ENCODE measurements at regions of chr7 and their contacts with region 1.

Region 1: GRCh38 chr7:39580149-39580874 is 14.1 kb downstream of the YAE1 start:
- DNase-seq: peak; percentile 63
- H3K4me3 Mint-ChIP-seq: no peak overlapping the region
- H3K27ac Mint-ChIP-seq: peak overlapping the region; percentile 64
- H3K4me1 Mint-ChIP-seq: peaks cover 10% of the 10 kb centered on the region
- H3K27me3 Mint-ChIP-seq: no peaks in the 10 kb centered on the region

Region 2: GRCh38 chr7:38463277-38464225 is 1116.8 kb before region 1 on chr7:
- intact Hi-C with region 1: no loop called
- DNase-seq: peak; percentile 61
- H3K4me3 Mint-ChIP-seq: peak overlapping the region; percentile 29
- H3K27ac Mint-ChIP-seq: peak overlapping the region; percentile 61
- H3K4me1 Mint-ChIP-seq: peaks cover 20% of the 10 kb centered on the region
- H3K27me3 Mint-ChIP-seq: peaks cover 5% of the 10 kb centered on the region

Region 3: DNA sequence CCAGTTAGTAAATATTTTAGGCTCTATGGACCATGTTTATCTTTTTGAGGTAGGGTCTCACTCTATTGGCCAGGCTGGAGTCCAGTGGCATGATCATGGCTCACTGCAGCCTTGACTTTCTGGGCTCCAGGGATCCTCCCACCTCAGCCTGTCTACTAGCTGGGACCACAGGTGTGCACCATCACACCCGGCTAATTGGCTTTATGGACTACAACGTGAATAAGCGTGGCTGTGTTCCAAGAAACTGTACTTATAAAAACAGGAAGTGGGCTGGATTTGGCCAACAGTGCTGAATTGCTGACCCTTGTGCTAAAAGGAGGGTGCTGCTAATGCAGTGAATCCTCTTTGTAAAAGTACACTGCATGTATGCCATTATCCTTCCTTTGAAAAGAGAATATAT is 258.0 kb after region 1 on chr7:
- intact Hi-C with region 1: loop called (anchors 10 kb)
- DNase-seq: no peak
- H3K4me3 Mint-ChIP-seq: no peak overlapping the region
- H3K27ac Mint-ChIP-seq: no peak overlapping the region
- H3K4me1 Mint-ChIP-seq: no peaks in the 10 kb centered on the region
- H3K27me3 Mint-ChIP-seq: peaks cover 53% of the 10 kb centered on the region

Region 4: GRCh38 chr7:40057292-40057691 is 477.0 kb after region 1 on chr7:
- intact Hi-C with region 1: loop called (anchors 1 kb)
- DNase-seq: no peak
- H3K4me3 Mint-ChIP-seq: no peak overlapping the region
- H3K27ac Mint-ChIP-seq: no peak overlapping the region
- H3K4me1 Mint-ChIP-seq: peaks cover 4% of the 10 kb centered on the region
- H3K27me3 Mint-ChIP-seq: no peaks in the 10 kb centered on the region

Measured in activated T-helper 1 cell treated with anti-CD3 and anti-CD28 coated beads, Interleukin-12 subunit alpha, Interleukin-12 subunit beta, Interleukin-2, Interleukin-4 antibody, amounts not matched to agents 30 ng/mL and 10 ng/mL and 1 ng/mL, durations not matched to agents 14 hours and 24 hours and 36 hours (primary cell).